Activated CD8-positive, alpha-beta T cell treated with anti-CD3 and anti-CD28 coated beads, Interleukin-2, amount 10 ng/mL, durations not matched to agents 7 days and 5 days (primary cell): ENCODE measurements at regions of chr3 and their contacts with region 1.

Region 1: GRCh38 chr3:149009732-149010131 is 18.4 kb downstream of the GYG1 start:
- DNase-seq: peak; percentile 86
- ATAC-seq: peak; percentile 98
- H3K4me3 Mint-ChIP-seq: peak overlapping the region; percentile 18
- H3K27ac Mint-ChIP-seq: peak overlapping the region; percentile 95
- H3K4me1 Mint-ChIP-seq: peaks cover 44% of the 10 kb centered on the region
- H3K27me3 Mint-ChIP-seq: no peaks in the 10 kb centered on the region

Region 2: GRCh38 chr3:148882288-148882687 is 127.4 kb before region 1 on chr3:
- CTCF ChIA-PET with region 1: no interaction called
- POLR2A ChIA-PET with region 1: no interaction called
- DNase-seq: no peak
- ATAC-seq: no peak
- H3K4me3 Mint-ChIP-seq: no peak overlapping the region
- H3K27ac Mint-ChIP-seq: no peak overlapping the region
- H3K4me1 Mint-ChIP-seq: no peaks in the 10 kb centered on the region
- H3K27me3 Mint-ChIP-seq: peaks cover 13% of the 10 kb centered on the region

Region 3: DNA sequence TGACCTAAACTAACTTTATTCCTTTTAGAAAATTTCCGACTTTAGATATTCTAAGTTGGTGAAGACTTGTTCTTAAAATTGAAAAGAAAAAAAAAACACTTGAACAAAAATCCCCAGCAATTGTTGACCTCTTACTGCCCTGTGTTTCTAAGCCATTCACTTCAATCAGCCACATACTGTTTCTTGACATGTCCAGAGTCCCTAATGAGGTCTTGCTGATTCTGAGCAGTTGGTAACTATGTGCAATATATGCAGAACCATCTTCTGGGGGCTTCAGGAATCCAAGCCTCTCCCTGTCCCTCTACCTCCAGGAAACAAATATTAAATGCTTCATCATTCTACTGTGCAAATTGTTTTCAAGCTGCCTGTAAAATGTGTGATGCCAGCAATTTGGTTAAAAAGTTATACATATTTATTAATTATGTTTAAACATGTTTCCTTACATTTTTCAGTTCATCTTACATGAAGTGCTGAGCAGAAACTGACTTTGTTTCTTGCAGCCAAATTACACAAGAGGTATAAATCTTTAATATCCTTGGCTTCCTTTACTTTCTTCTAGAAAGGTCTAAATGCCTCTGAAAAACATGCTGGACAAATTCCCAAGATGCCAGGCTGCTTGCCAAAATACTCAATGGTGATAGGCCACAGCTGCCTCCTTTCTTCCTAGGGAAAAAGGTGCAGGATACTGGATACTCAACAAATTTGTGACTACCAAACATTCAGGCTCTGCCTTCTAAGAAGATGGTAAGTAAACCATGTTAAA is 38.1 kb before region 1 on chr3:
- CTCF ChIA-PET with region 1: no interaction called
- POLR2A ChIA-PET with region 1: no interaction called
- DNase-seq: no peak
- ATAC-seq: no peak
- H3K4me3 Mint-ChIP-seq: no peak overlapping the region
- H3K27ac Mint-ChIP-seq: no peak overlapping the region
- H3K4me1 Mint-ChIP-seq: peaks cover 4% of the 10 kb centered on the region
- H3K27me3 Mint-ChIP-seq: no peaks in the 10 kb centered on the region

Region 4: DNA sequence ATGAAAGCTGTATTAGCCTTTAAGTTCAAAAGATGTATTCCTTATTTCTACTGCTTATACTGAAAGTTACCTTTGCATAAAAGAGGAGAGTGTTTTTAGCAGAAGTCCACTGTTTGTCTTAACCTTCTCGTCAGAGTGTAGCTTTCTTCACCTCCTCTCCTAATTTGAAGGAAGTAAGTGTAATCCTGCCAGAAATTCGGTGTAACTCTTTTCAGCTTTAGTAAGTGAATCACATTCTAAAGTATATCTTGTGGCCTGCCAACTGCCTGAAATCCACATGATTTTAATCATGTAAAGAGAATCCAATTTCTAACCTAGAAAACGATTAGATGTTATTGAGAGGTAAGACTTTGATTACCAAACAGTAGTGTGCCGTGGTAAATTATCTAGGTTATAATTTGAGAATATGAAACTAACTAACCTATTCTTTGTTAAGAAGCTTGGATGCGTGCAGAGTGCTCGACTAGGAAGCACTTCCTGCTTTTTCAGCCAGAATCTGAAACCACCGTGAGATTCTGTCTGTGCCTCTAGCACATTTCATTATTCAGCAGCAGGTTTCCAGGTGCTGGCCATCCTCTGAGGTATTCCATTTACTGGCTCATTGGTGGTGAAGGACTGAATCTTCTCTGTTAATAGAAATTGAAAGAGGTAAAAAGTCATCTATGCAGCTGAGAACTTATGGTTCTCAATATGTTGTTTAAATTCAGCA is 10.9 kb before region 1 on chr3:
- CTCF ChIA-PET with region 1: interaction called, 8 read pairs
- POLR2A ChIA-PET with region 1: interaction called, 17 read pairs
- DNase-seq: peak; percentile 47
- ATAC-seq: peak; percentile 59
- H3K4me3 Mint-ChIP-seq: peak overlapping the region; percentile 30
- H3K27ac Mint-ChIP-seq: peak overlapping the region; percentile 77
- H3K4me1 Mint-ChIP-seq: peaks cover 51% of the 10 kb centered on the region
- H3K27me3 Mint-ChIP-seq: no peaks in the 10 kb centered on the region